Sigmoid colon (tissue), 7 donors: ENCODE measurements at regions of chr1 and their contacts with region 1.

Region 1: GRCh38 chr1:178031856-178032320 is 62.0 kb upstream of the RASAL2 start:
- DNase-seq: peak; percentile 95
- H3K4me3 ChIP-seq: no peak overlapping the region
- H3K27ac ChIP-seq: no peak overlapping the region
- H3K4me1 ChIP-seq: peaks cover 0 to 2% (median 0%) of the 10 kb centered on the region in 4 donors
- H3K27me3 ChIP-seq: no peaks in the 10 kb centered on the region
- CTCF ChIP-seq: peak; percentile 59 to 77 (median 71)
- EP300 ChIP-seq: no peak
- POLR2A ChIP-seq: no peak

Region 2: GRCh38 chr1:177948336-177948972 is 83.4 kb before region 1 on chr1:
- intact Hi-C with region 1: no loop called
- DNase-seq: peak; percentile 75
- H3K4me3 ChIP-seq: no peak overlapping the region
- H3K27ac ChIP-seq: no peak overlapping the region
- H3K4me1 ChIP-seq: peaks cover 0 to 9% (median 0%) of the 10 kb centered on the region in 4 donors
- H3K27me3 ChIP-seq: no peaks in the 10 kb centered on the region
- CTCF ChIP-seq: peak; percentile 28 to 81 (median 78)
- EP300 ChIP-seq: no peak
- POLR2A ChIP-seq: no peak

Region 3: DNA sequence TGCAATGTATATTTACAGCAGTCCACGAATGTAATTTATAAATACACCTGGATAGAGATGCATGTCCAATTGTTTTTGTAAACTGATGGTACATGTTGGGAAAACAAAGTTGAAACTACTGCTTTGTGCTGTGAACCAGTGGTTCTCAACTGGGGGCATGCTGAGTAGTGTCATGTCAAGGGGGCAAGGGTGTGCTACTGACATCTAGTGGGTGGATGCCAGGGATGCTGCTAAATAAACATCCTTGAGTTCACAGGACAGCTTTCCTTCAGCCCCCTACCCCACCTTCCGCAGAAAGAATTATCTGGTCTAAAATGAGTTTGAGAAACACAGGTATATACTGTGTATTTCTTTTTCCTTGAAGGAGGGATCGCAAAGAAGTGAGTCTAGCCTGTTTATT is 157.9 kb after region 1 on chr1:
- intact Hi-C with region 1: loop called (anchors 10 kb)
- DNase-seq: no peak
- H3K4me3 ChIP-seq: no peak overlapping the region
- H3K27ac ChIP-seq: no peak overlapping the region
- H3K4me1 ChIP-seq: no peaks in the 10 kb centered on the region
- H3K27me3 ChIP-seq: no peaks in the 10 kb centered on the region
- CTCF ChIP-seq: peak in 1 of 4 experiments; percentile 15
- EP300 ChIP-seq: no peak
- POLR2A ChIP-seq: no peak

Region 4: DNA sequence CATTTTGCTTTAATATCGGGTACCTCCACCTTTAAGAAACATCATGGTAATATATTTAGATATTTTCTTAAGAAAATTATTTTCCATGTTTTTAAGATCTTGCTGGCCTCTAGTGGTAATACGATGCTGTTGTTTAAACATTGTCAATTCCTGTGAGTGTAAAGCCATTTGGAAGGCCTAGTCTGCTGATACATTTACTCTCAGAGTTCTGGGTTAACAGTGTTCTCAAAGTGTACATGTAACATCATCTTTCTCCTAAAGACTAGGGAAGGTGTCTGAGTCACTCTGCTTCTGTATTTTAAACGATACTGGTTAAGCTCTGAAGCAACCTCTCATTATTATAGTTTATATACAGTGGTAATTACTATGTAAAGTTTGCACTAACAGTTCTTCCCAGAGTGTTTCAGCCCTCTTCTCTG is 251.1 kb after region 1 on chr1:
- intact Hi-C with region 1: loop called (anchors 1 kb)
- DNase-seq: no peak
- H3K4me3 ChIP-seq: no peak overlapping the region
- H3K27ac ChIP-seq: no peak overlapping the region
- H3K4me1 ChIP-seq: peaks cover 0 to 8% (median 0%) of the 10 kb centered on the region in 4 donors
- H3K27me3 ChIP-seq: no peaks in the 10 kb centered on the region
- CTCF ChIP-seq: peak in 3 of 4 experiments; percentile 17 to 32 (median 28)
- EP300 ChIP-seq: no peak
- POLR2A ChIP-seq: no peak